ENCODE measurements at regions of chr17 and their contacts with region 1.

Region 1: DNA sequence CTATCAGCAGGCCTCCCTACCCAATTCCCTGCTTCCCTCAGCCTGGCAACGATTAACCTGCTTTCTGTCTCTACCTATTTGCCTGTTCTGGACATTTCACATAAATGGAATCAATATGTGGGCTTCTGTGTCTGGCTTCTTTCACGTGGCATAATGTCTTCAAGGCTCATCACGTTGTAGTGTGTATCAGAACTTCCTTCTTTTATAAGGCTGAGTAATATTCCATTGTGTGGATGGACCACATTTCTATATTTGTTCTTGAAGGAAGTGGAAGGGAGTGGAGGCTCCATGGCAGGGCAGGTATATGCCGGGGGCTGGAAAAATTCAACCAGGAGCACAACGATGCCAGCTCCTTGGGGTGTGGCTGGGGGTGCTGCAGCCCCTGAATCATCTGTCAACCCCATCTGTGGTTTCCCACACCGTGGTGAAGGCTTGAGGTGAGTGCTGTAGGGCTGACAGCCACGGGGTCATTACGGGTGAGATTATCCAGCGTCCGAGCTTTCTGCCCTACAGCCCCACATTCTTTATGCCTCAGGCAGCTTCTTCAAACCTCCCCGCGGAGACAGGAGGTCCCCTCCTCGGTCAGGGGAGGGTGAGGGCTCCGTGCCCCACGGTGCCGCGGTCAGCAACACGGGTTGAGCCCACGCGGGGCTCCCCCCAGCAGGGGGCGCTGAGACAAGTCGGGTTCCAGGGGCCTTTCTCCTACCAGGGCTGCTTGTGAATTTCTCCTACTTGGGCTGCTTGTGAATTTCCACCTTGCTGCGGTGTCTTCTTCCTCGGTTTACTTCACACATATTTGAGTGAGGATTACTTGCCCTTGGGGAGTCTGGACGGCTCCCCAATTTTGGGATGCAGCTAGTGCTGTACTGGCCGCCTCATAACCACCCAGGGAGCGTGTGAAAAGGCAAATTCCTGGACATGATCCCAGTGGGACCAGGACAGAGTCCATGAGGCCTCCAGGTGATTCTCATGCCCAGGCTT is 18.3 kb upstream of the WFIKKN2 start:
- DNase-seq: peak in 3 of 5 donors; percentile 39 to 49 (median 49)
- ATAC-seq: peak; percentile 42 to 79 (median 68)
- H3K4me3 ChIP-seq: peak overlapping the region in 1 of 12 donors; percentile 14
- H3K27ac ChIP-seq: no peak overlapping the region
- H3K4me1 ChIP-seq: peaks cover 0 to 8% (median 0%) of the 10 kb centered on the region in 12 donors
- H3K27me3 ChIP-seq: peaks cover 0 to 8% (median 0%) of the 10 kb centered on the region in 9 donors
- CTCF ChIP-seq: peak; percentile 69 to 87 (median 80)
- POLR2A ChIP-seq: no peak

Region 2: GRCh38 chr17:50828508-50829170 is 11.6 kb after region 1 on chr17:
- intact Hi-C with region 1: loop called in 1 of 10 experiments (anchors 1 kb)
- DNase-seq: no peak
- ATAC-seq: peak in 1 of 4 donors; percentile 22
- H3K4me3 ChIP-seq: no peak overlapping the region
- H3K27ac ChIP-seq: peak overlapping the region in 2 of 12 donors; percentile 17 to 26
- H3K4me1 ChIP-seq: peaks cover 0 to 17% (median 0%) of the 10 kb centered on the region in 12 donors
- H3K27me3 ChIP-seq: no peaks in the 10 kb centered on the region
- CTCF ChIP-seq: no peak
- POLR2A ChIP-seq: no peak

Region 3: GRCh38 chr17:50841949-50842354 is 24.9 kb after region 1 on chr17:
- intact Hi-C with region 1: loop called in 1 of 10 experiments (anchors 2 kb)
- DNase-seq: peak; percentile 49 to 81 (median 60)
- ATAC-seq: peak in 3 of 4 donors; percentile 47 to 73 (median 57)
- H3K4me3 ChIP-seq: no peak overlapping the region
- H3K27ac ChIP-seq: no peak overlapping the region
- H3K4me1 ChIP-seq: peaks cover 0 to 20% (median 6%) of the 10 kb centered on the region in 12 donors
- H3K27me3 ChIP-seq: no peaks in the 10 kb centered on the region
- CTCF ChIP-seq: peak; percentile 55 to 87 (median 79)
- POLR2A ChIP-seq: no peak

Region 4: DNA sequence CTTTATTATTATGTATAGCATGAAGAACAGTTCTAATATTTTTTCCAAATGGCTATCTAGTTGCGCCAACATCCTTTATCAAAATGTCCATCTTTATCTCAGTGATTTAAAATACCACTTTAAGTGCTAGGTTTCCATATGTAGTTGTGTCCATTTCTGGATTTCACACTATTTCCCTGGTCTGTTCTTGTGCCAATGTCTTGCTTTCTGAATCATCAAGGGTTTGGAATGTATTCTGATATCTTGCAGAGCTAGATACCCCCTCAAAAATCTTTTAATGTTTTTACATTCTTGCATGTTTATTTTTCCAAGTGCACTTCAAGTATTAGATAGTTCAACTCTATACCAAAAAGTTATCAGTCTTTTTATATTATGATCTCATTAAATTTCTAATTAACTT is 428.5 kb after region 1 on chr17:
- intact Hi-C with region 1: no loop called
- DNase-seq: no peak
- ATAC-seq: no peak
- H3K4me3 ChIP-seq: no peak overlapping the region
- H3K27ac ChIP-seq: no peak overlapping the region
- H3K4me1 ChIP-seq: no peaks in the 10 kb centered on the region
- H3K27me3 ChIP-seq: no peaks in the 10 kb centered on the region
- CTCF ChIP-seq: no peak
- POLR2A ChIP-seq: no peak